ENCODE measurements at regions of chr15 and their contacts with region 1.

Region 1: GRCh38 chr15:95567686-95568085 is 762.8 kb upstream of the NR2F2 start:
- DNase-seq: no peak
- H3K4me3 ChIP-seq: no peak overlapping the region
- CTCF ChIP-seq: no peak
- POLR2A ChIP-seq: no peak

Region 2: GRCh38 chr15:94297558-94297957 is 1270.1 kb before region 1 on chr15:
- intact Hi-C with region 1: no loop called
- DNase-seq: no peak
- H3K4me3 ChIP-seq: no peak overlapping the region
- CTCF ChIP-seq: no peak
- POLR2A ChIP-seq: no peak

Region 3: DNA sequence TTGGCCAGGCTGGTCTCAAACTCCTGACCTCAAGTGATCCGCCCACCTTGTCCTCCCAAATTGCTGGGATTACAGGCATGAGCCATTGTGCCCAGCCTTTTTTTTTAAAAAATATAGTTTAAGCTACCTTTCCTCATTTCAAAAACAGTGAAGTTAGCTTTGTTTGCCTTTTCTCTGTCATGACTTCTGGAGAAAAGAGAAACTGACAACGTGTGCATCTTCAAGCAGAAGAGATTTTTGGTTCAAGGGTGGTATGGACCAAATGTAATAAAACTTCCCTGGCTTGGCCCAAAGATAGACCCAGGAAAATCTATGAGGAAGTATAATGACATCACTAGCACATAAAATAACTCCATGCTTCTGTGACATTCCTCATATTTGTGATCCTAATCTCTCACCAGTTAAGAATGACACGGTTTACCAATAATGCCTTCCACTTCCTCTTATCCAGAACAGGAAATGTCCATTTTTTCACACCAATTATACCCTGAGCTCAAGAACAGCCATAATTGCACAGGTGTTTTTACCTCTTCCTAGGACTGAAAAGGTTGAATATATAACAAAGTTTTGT is 18.4 kb before region 1 on chr15:
- intact Hi-C with region 1: loop called (anchors 1 kb)
- DNase-seq: no peak
- H3K4me3 ChIP-seq: no peak overlapping the region
- CTCF ChIP-seq: no peak
- POLR2A ChIP-seq: no peak